ENCODE measurements at regions of chr19 and their contacts with region 1.

Region 1: GRCh38 chr19:38402967-38403861 is at the start of gene FAM98C:
- DNase-seq: peak; percentile 99
- H3K4me3 Mint-ChIP-seq: peak within 1 kb of the TSS; percentile 86
- H3K27ac Mint-ChIP-seq: peak within 1 kb of the TSS; percentile 91
- H3K4me1 Mint-ChIP-seq: peaks cover 20% of the 10 kb centered on the region
- H3K27me3 Mint-ChIP-seq: no peaks in the 10 kb centered on the region
- total RNA-seq, gene FAM98C: 29.8 to 31.9 TPM

Region 2: GRCh38 chr19:38374429-38375176 is 28.6 kb before region 1 on chr19 and contains the start of gene PSMD8:
- CTCF ChIA-PET with region 1: interaction called, 40 read pairs
- POLR2A ChIA-PET with region 1: interaction called, 9 read pairs
- intact Hi-C with region 1: loop called (anchors 1 kb)
- DNase-seq: peak; percentile 99
- H3K4me3 Mint-ChIP-seq: peak within 1 kb of the TSS; percentile 86
- H3K27ac Mint-ChIP-seq: peak within 1 kb of the TSS; percentile 87
- H3K4me1 Mint-ChIP-seq: peaks cover 22% of the 10 kb centered on the region
- H3K27me3 Mint-ChIP-seq: no peaks in the 10 kb centered on the region
- total RNA-seq, gene PSMD8: 214 to 224 TPM

Region 3: DNA sequence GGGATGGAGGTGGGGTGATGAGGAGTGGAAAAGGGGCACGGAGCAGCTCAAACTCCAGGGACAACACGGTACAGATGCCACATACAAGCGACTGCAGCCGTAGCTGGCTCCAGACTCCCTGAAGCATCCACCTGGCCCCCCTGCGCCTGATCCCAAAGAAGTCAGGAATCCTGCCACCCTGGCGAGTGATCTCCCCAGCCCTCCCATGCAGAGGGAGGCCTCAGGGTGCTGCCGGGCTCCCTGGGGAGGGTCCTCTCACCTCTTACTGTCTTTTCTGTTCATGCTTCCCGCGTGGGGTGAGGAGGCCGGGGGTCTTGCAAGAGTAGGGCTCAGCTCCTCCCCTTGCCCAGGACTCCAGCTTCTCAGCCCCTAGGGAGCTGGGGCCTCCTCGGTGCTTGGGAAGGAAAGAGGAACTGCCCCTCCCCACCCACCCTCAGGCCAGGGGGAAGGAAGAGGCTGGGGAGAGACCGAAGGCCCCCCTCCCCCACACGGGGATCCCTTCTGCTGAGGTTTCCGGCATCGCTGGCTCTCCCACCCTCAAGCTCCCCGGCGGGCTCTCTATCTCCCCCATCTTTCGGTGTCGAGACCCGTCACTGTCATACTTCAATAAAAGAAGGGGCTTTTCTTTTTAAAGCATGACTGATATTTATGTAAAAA is 22.7 kb after region 1 on chr19 and contains the start of gene RASGRP4:
- CTCF ChIA-PET with region 1: interaction called, 29 read pairs
- POLR2A ChIA-PET with region 1: interaction called, 4 read pairs
- intact Hi-C with region 1: no loop called
- DNase-seq: peak; percentile 79
- H3K4me3 Mint-ChIP-seq: peak within 1 kb of the TSS; percentile 61
- H3K27ac Mint-ChIP-seq: peak within 1 kb of the TSS; percentile 92
- H3K4me1 Mint-ChIP-seq: peaks cover 35% of the 10 kb centered on the region
- H3K27me3 Mint-ChIP-seq: no peaks in the 10 kb centered on the region
- total RNA-seq, gene RASGRP4: 7.4 to 8.3 TPM

Region 4: DNA sequence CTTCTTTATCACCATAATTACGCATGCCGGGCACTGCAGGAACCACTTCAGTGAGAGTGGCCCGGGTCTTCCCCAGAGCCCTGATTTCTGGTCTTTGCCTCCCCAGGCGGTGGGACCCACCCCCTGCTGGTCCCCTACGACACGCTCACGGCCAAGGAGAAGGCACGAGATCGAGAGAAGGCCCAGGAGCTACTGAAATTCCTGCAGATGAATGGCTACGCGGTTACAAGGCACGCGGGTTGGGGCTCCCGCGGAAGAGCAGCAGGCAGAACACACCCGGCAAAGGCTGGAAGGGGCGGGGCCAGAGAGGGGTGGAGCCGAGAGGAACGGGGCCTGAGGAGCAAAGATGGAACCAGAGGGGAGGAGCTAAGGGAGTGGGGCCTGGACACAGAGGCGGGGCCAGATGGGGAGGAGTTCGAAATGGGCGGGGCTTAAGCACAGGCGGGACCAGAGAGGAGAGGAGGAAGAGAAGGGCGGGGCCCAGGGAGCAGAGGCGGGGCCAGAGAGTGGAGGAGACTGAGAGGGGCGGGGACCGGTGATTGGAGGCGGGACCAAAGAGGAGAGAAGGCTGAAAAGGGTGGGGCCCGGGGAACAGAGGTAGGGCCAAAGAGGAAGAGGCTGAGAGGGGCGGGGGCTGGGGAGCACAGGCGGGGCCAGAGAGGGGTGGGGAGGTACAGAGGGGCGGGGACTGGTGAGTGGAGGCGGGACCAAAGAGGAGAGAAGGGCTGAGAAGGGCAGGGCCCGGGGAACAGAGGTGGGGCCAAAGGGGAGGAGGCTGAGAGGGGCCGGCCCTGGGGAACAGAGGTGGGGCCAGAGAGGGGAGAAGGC is 103.7 kb after region 1 on chr19:
- CTCF ChIA-PET with region 1: interaction called, 11 read pairs
- POLR2A ChIA-PET with region 1: interaction called, 3 read pairs
- intact Hi-C with region 1: no loop called
- DNase-seq: peak; percentile 96
- H3K4me3 Mint-ChIP-seq: no peak overlapping the region
- H3K27ac Mint-ChIP-seq: no peak overlapping the region
- H3K4me1 Mint-ChIP-seq: peaks cover 4% of the 10 kb centered on the region
- H3K27me3 Mint-ChIP-seq: no peaks in the 10 kb centered on the region

Region 5: GRCh38 chr19:38618590-38619360 is 215.6 kb after region 1 on chr19 and contains the start of gene EIF3K:
- CTCF ChIA-PET with region 1: interaction called, 50 read pairs
- POLR2A ChIA-PET with region 1: interaction called, 6 read pairs
- intact Hi-C with region 1: loop called (anchors 10 kb)
- DNase-seq: peak; percentile 99
- H3K4me3 Mint-ChIP-seq: peak within 1 kb of the TSS; percentile 99
- H3K27ac Mint-ChIP-seq: peak within 1 kb of the TSS; percentile 92
- H3K4me1 Mint-ChIP-seq: peaks cover 34% of the 10 kb centered on the region
- H3K27me3 Mint-ChIP-seq: no peaks in the 10 kb centered on the region
- total RNA-seq, gene EIF3K: 273 to 287 TPM

Region 6: DNA sequence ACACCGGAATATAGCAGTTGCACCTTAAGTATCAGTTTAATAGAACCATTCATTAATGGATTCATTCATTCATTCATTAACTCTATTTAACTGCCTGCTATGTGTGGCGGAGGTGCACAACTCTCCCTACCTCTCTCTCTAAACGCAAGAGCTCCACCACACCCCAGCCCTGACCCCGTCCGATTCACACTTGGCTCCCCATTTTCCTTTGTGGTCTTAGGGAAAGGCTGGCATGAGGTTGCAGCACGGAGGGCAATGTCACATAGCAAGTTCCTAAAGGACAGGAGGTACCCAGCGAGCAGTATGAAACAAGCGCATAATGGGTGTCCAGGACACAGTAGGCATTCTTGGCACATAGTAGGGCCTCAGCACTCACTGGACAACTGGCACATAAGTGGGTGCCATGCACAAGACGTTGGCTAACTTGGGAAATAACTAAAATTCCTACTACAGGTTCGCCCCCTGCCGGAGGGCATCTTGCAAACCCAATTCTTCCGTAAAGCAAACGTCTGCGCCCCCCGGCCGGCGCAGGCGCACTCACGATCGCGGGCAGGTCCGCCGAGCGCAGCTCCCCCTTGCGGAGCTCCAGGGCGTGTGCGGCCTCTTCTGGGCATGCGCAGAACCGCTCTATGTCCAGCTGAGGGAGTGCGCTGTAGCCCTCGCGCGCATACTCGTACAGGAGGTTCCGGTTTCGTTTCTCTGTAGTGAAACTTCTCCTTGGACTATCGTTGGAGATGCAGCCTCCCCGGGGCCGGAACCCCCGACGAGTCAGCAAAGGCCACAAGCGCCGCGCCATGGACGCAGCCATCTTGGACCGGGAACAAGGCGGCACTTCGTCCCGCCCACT is 526.9 kb after region 1 on chr19 and contains the start of gene SARS2:
- CTCF ChIA-PET with region 1: interaction called, 25 read pairs
- POLR2A ChIA-PET with region 1: no interaction called
- intact Hi-C with region 1: loop called (anchors 1 kb)
- DNase-seq: peak; percentile 95
- H3K4me3 Mint-ChIP-seq: peak within 1 kb of the TSS; percentile 94
- H3K27ac Mint-ChIP-seq: peak within 1 kb of the TSS; percentile 96
- H3K4me1 Mint-ChIP-seq: peaks cover 34% of the 10 kb centered on the region
- H3K27me3 Mint-ChIP-seq: no peaks in the 10 kb centered on the region
- total RNA-seq, gene SARS2: 33.7 to 39.6 TPM